ENCODE measurements at regions of chr2 and their contacts with region 1.

Region 1: GRCh38 chr2:126536605-126537200 is 119.3 kb upstream of the GYPC start:
- DNase-seq: no peak

Region 2: GRCh38 chr2:126586317-126586716 is 49.6 kb after region 1 on chr2:
- intact Hi-C with region 1: loop called (anchors 5 kb)
- DNase-seq: no peak